ENCODE measurements at regions of chr16 and their contacts with region 1.

Region 1: DNA sequence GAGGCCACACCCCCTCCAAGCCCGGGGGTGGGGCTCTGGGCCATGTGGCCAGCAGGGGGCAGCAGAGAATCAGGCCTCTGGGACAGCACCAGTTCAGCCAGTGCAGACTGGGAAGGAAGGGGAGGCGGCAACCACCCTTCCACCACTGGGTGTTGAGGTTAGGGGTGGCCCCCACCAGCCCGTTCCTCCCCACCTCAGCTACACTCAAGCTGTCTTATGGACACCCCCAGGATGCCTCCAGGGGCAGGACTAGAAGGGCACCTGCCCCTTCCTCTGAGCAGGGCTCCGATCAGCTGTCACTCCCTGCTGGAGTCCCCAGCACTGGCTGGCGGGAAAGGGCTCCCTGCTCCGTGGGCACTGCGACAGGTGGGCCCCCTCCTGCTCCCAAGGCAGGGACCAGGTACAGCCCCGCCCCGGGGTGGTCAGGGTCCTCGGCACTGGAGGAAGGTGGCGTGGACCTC is 21.8 kb downstream of the KATNB1 start:
- DNase-seq: peak; percentile 95
- CTCF ChIP-seq: peak; percentile 97

Region 2: GRCh38 chr16:57628008-57628781 is 129.2 kb before region 1 on chr16 and contains the start of gene ADGRG1:
- CTCF ChIA-PET with region 1: no interaction called
- POLR2A ChIA-PET with region 1: no interaction called
- DNase-seq: peak; percentile 47
- CTCF ChIP-seq: no peak

Region 3: DNA sequence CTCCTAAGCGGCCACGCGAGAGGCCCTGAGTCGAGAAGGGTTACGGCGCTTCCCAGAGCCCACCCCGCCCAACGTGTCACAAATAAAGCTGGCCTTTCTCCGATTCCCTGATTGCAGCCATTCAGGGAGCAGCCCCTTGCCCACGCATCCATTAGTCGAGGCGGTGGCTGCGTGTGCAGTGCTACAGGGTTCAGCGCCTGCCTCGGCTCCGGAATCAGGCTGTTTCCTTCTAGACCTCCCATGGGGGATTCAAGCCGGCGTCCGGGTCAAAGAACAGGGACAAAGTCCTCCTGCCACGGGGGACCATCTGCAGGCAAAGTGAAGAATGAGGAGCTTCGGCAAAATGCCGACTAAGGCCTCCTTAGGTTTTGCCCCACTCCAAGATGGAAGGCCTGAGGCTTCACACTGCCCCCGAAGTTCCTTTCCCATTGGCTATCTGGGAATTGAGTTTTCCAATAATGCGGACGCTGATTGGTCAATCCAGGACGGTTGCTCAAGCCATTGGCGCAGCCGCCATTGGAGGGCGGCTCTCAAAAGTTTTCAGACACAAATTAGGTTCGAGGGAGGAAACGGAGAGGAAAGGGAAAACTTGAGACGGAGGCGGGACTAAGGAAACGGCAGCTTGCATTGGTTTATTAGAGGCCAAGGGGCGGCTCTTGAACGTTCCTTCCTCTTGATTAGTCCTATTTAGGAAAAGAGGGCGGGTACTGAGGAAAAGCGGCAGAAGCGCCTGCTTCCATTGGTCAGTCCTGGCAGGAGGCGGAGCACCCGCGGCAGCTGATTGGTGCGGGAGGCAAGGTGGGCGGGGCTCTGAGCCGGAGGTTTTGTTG is 22.2 kb before region 1 on chr16:
- CTCF ChIA-PET with region 1: interaction called, 21 read pairs
- POLR2A ChIA-PET with region 1: no interaction called
- DNase-seq: peak; percentile 99
- CTCF ChIP-seq: no peak

Region 4: GRCh38 chr16:57770361-57770760 is 13.0 kb after region 1 on chr16:
- CTCF ChIA-PET with region 1: interaction called, 14 read pairs
- POLR2A ChIA-PET with region 1: no interaction called
- DNase-seq: no peak
- CTCF ChIP-seq: no peak

Region 5: DNA sequence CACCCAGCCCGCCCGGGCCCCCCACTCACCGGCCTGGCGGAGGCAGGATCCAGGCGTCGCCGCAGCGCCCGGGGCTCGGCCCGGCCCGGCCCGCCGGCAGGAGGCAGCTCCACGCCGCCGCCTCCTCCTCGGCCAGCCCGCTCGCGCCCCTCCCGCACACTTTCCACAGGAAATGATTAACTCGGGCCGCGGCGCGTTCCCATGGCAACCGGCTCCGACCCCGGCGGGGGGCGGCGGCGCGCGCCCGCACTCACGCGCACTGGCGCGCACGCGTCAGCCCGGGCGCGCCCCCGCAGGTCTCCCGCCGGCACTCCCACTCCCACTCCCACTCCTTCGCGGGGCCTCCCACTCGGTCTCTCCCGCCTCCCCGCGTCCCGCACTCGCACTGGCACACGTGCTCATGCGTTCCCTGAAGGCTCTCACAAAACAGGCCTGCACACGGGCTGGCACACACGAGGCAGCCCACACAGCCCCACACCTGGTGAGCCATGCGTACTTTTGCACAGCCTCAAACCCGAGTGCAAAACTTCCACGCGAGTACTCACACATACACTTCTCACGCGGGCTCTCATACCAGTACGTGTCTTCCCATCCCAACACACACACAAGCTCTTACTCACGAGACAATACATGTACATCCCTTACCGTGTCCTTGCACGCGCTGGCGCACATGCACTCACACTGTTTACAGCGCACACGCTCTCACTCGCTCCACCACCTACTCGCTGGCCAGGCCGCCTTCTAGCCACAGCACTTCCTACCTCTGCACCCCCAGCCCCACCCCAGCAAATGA is 45.2 kb after region 1 on chr16 and contains the start of gene KIFC3:
- CTCF ChIA-PET with region 1: interaction called, 12 read pairs
- POLR2A ChIA-PET with region 1: no interaction called
- DNase-seq: peak; percentile 69
- CTCF ChIP-seq: peak; percentile 15

Region 6: GRCh38 chr16:57899771-57900661 is 142.7 kb after region 1 on chr16:
- CTCF ChIA-PET with region 1: no interaction called
- POLR2A ChIA-PET with region 1: no interaction called
- DNase-seq: peak; percentile 71
- CTCF ChIP-seq: peak; percentile 77

Region 7: GRCh38 chr16:58000706-58001676 is 243.6 kb after region 1 on chr16 and contains the start of gene USB1:
- CTCF ChIA-PET with region 1: interaction called, 18 read pairs
- POLR2A ChIA-PET with region 1: no interaction called
- DNase-seq: peak; percentile 98
- CTCF ChIP-seq: peak; percentile 86